Activated CD4-positive, alpha-beta memory T cell treated with anti-CD3 and anti-CD28 coated beads, Interleukin-2, amount 10 ng/mL, durations not matched to agents 7 days and 5 days (primary cell): ENCODE measurements at regions of chr5 and their contacts with region 1.

Region 1: GRCh38 chr5:43313035-43313853 is at the start of gene HMGCS1:
- DNase-seq: peak; percentile 99
- H3K4me3 Mint-ChIP-seq: peak within 1 kb of the TSS; percentile 99
- H3K27ac Mint-ChIP-seq: peak within 1 kb of the TSS; percentile 85
- H3K4me1 Mint-ChIP-seq: peaks cover 73% of the 10 kb centered on the region
- H3K27me3 Mint-ChIP-seq: no peaks in the 10 kb centered on the region
- total RNA-seq, gene HMGCS1: 150 to 155 TPM

Region 2: DNA sequence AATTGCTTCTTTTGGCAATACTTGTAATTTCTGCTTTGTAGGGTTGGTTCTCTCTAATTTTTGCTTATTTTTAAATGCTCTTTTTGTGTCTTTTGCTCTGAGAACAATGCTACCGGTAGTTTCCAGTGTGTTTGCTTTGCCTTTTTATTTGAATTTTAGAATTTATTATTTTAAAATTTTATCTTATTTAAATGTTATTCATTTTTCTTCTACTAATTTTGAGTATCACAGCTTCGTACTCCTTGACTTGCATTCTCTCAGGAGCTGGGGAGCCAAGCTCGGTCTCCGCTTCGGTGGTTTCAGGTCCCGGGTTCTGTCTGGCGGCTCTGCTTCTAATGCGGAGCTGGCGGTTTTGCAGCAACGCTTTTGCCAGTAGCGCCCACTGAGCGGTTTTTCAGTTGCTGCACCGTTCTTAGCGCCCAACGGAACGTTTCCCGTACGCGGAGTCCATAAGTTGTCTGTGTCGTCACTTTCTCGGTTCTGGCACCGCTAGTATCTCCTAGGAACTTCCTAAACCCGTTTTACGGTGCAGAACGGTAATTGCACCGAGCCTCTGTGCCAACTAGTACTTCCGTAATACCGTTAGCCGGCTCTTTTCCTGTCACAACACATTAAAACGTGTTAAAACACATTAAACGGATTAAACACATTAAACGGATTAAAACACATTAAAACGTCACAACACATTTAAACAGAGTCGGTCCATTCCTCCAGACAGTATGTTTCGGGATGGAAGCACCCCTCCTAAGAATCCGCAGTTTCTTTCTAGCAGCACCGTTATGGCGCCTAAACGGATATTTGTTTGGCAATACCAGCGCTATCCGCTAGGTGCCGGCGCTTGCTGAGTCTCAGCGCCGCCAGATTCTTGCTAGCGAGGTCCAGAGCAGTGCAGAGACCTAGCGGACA is 318.7 kb before region 1 on chr5:
- CTCF ChIA-PET with region 1: no interaction called
- POLR2A ChIA-PET with region 1: interaction called, 18 read pairs
- DNase-seq: peak; percentile 91
- H3K4me3 Mint-ChIP-seq: peak overlapping the region; percentile 99
- H3K27ac Mint-ChIP-seq: peak overlapping the region; percentile 100
- H3K4me1 Mint-ChIP-seq: peaks cover 25% of the 10 kb centered on the region
- H3K27me3 Mint-ChIP-seq: no peaks in the 10 kb centered on the region

Region 3: DNA sequence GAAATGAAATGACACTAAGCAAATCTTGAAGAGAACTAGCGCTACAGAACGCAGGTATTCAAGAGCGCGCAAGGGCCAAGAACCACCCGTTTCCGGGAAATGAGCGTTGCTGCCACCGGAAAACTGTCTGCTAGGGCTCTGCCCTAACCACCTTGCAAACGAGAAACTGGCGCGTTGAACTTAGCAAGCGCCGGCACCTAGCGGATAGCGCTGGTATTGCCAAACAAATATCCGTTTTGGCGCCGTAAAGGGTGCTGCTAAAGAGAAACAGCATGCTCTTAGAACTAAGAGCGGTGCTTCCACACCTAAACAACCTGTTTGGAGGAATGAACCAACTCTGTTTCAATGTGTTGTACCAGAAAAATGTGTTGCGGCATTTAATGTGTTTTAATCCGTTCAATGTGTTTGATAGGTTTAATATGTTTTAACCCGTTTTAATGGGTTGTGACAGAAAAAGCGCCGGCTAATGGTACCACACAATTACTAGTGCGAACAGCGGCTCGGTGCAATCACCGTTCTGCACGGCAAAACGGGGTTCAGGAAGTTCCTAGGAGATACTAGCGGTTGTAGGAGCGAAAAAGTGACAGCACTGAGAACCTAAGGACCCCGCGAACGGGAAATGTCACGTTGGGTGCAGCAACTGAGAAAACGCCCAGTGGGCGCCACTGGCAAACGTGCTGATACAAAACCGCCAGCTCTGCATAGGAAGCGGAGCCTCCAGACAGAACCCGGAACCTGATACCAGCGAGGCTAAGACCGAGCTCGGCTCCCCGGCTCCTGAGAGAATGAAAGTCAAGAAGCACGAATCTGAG is 272.8 kb before region 1 on chr5 and contains the start of gene ANXA2R:
- CTCF ChIA-PET with region 1: interaction called, 7 read pairs
- POLR2A ChIA-PET with region 1: interaction called, 32 read pairs
- DNase-seq: peak; percentile 96
- H3K4me3 Mint-ChIP-seq: peak within 1 kb of the TSS; percentile 97
- H3K27ac Mint-ChIP-seq: peak within 1 kb of the TSS; percentile 99
- H3K4me1 Mint-ChIP-seq: peaks cover 42% of the 10 kb centered on the region
- H3K27me3 Mint-ChIP-seq: no peaks in the 10 kb centered on the region
- total RNA-seq, gene ANXA2R: 25.1 to 28.3 TPM

Region 4: DNA sequence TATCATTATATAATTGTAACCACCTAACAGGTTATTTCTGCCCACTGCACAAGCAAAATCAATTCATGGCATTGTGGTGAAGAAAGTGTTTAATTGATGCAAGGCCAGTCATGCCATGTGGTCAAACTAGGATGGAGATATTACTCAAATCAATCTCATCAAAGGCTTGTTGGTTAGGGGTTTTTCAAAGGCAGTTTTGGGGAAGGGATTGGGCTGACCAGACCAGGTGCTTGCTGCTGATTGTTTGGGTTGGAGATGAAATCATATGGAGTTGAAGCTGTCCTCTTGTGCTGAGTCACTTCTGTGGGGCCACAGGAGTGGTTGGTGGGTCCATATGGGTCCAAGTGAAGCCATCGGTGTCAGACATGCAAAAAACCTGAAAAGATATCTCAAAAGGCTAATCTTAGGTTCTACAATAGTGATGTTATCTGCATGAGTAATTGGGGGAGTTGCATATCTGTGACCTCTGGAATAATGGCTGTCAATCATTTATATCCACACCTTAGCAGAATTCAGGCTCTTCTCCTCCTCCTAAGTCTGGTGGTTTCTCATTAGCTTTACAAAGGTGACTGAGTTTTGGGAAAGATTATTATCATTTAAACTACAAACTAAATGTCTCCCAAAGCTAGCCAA is 44.9 kb before region 1 on chr5:
- CTCF ChIA-PET with region 1: no interaction called
- POLR2A ChIA-PET with region 1: no interaction called
- DNase-seq: no peak
- H3K4me3 Mint-ChIP-seq: no peak overlapping the region
- H3K27ac Mint-ChIP-seq: no peak overlapping the region
- H3K4me1 Mint-ChIP-seq: peaks cover 11% of the 10 kb centered on the region
- H3K27me3 Mint-ChIP-seq: peaks cover 22% of the 10 kb centered on the region

Region 5: GRCh38 chr5:43298443-43298842 is 14.8 kb before region 1 on chr5:
- CTCF ChIA-PET with region 1: interaction called, 4 read pairs
- POLR2A ChIA-PET with region 1: interaction called, 16 read pairs
- DNase-seq: no peak
- H3K4me3 Mint-ChIP-seq: no peak overlapping the region
- H3K27ac Mint-ChIP-seq: no peak overlapping the region
- H3K4me1 Mint-ChIP-seq: peaks cover 26% of the 10 kb centered on the region
- H3K27me3 Mint-ChIP-seq: no peaks in the 10 kb centered on the region

Region 6: GRCh38 chr5:43432473-43433365 is 119.5 kb after region 1 on chr5:
- CTCF ChIA-PET with region 1: no interaction called
- POLR2A ChIA-PET with region 1: no interaction called
- DNase-seq: no peak
- H3K4me3 Mint-ChIP-seq: no peak overlapping the region
- H3K27ac Mint-ChIP-seq: no peak overlapping the region
- H3K4me1 Mint-ChIP-seq: no peaks in the 10 kb centered on the region
- H3K27me3 Mint-ChIP-seq: no peaks in the 10 kb centered on the region

Region 7: GRCh38 chr5:43556857-43557542 is 243.8 kb after region 1 on chr5 and contains the start of gene PAIP1:
- CTCF ChIA-PET with region 1: no interaction called
- POLR2A ChIA-PET with region 1: interaction called, 12 read pairs
- DNase-seq: peak; percentile 87
- H3K4me3 Mint-ChIP-seq: peak within 1 kb of the TSS; percentile 86
- H3K27ac Mint-ChIP-seq: peak within 1 kb of the TSS; percentile 87
- H3K4me1 Mint-ChIP-seq: peaks cover 14% of the 10 kb centered on the region
- H3K27me3 Mint-ChIP-seq: peaks cover 7% of the 10 kb centered on the region
- total RNA-seq, gene PAIP1: 37.0 to 38.8 TPM